Endothelial cell of umbilical vein (primary cell): ENCODE measurements at regions of chr1 and their contacts with region 1.

Region 1: GRCh38 chr1:32005522-32005921 is 8.1 kb upstream of the KHDRBS1 start:
- DNase-seq: no peak
- H3K4me3 ChIP-seq: no peak overlapping the region
- H3K27ac ChIP-seq: no peak overlapping the region
- H3K4me1 ChIP-seq: peaks cover 14% of the 10 kb centered on the region
- H3K27me3 ChIP-seq: no peaks in the 10 kb centered on the region
- CTCF ChIP-seq: no peak
- POLR2A ChIP-seq: no peak

Region 2: DNA sequence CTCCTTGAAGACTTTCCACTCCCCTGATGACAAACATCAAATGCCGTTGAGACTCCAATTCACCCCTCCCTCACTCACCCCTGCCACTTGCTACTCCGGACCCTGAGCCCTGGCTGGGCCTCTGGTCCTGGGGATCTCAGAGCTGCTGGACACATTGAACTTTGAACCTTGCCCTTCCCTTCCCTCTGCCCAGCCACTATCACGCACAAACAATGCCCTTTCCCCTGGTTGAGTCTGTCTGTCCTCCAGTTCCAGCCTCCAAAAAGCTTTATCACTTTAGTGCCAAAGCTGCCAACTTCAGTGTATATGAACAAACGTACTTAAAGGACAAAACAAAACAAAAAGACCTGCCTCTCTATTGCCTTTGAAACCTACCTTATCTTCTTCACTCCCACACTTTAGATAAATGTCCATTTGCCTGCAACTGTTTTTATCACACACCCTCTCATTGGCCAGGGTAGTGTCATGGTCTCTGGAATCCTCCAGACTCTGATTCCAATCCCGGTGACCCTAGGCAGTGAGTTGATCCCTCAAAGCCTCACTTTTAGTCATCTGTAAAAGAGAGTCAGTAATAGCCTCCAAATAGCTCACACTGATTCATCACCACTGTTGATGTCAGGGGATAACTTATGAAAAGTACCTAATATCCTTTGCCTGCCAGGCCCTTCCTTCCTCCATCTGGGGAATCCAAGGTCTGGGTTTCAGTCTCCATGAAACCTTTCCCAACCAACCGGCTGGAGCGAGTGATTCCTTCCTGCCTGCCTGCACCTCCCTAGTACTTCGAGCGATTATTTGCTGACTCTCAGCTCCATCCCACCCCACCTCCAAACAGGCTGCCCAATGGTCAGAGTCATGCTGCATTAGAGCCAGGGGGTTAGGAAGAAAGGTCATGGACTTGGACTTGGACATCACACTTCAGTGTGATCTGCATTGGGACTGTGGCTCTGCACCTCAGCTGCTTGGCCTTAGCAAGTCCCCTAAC is 173.8 kb before region 1 on chr1:
- CTCF ChIA-PET with region 1: no interaction called
- POLR2A ChIA-PET with region 1: no interaction called
- dilution Hi-C with region 1: no loop called
- intact Hi-C with region 1: no loop called
- DNase-seq: no peak
- H3K4me3 ChIP-seq: no peak overlapping the region
- H3K27ac ChIP-seq: no peak overlapping the region
- H3K4me1 ChIP-seq: no peaks in the 10 kb centered on the region
- H3K27me3 ChIP-seq: peaks cover 3 to 6% of the 10 kb centered on the region in 2 experiments
- CTCF ChIP-seq: no peak
- POLR2A ChIP-seq: no peak

Region 3: GRCh38 chr1:31977385-31978131 is 28.0 kb before region 1 on chr1:
- CTCF ChIA-PET with region 1: interaction called, 27 read pairs
- POLR2A ChIA-PET with region 1: no interaction called
- dilution Hi-C with region 1: no loop called
- intact Hi-C with region 1: no loop called
- DNase-seq: peak; percentile 44
- H3K4me3 ChIP-seq: no peak overlapping the region
- H3K27ac ChIP-seq: no peak overlapping the region
- H3K4me1 ChIP-seq: peaks cover 4% of the 10 kb centered on the region
- H3K27me3 ChIP-seq: no peaks in the 10 kb centered on the region
- CTCF ChIP-seq: peak; percentile 14 to 48
- POLR2A ChIP-seq: no peak

Region 4: DNA sequence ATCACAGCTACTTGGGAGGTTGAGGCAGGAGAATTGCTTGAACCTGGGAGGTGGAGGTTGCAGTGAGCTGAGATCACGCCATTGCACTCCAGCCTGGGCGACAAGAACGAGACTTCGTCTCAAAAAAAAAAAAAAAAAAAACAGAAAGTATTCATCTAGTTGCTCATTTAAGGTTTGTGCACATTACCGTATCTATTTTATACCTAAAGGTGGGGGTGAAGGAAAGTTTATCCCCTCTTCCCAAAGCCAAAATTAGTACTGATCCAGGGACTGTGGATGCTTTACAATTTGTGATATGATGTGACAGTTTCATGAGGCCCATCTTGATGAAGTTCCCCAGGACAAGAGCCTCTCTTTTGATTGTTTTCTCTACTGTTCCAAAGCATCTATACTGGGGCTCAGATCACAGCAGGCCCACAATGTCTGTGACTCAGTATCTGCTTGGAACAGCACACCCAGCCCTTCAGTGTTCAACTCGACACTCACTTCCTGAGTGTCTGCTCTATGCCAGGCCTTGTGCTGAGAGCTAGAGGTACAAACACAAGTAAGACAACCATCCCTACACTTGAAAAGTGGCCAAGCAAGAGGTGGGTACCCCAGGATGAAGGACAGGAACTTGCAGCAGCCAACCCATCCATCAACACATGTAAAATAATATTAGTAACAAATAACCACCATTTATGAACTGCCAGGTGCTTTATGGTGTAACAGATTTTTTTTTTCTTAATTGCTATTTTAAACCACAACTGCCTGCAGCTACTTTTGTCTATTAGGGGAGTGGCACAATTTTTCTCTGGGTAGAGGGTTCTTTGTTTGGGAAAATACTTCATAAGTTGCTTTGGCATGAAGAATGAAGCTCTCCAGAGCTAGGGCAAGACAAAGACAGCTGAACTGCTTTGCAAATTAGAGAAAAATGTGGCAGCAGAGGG is 20.8 kb before region 1 on chr1:
- CTCF ChIA-PET with region 1: interaction called, 14 read pairs
- POLR2A ChIA-PET with region 1: no interaction called
- dilution Hi-C with region 1: no loop called
- intact Hi-C with region 1: no loop called
- DNase-seq: peak; percentile 64
- H3K4me3 ChIP-seq: no peak overlapping the region
- H3K27ac ChIP-seq: no peak overlapping the region
- H3K4me1 ChIP-seq: peaks cover 16% of the 10 kb centered on the region
- H3K27me3 ChIP-seq: no peaks in the 10 kb centered on the region
- CTCF ChIP-seq: no peak
- POLR2A ChIP-seq: no peak

Region 5: DNA sequence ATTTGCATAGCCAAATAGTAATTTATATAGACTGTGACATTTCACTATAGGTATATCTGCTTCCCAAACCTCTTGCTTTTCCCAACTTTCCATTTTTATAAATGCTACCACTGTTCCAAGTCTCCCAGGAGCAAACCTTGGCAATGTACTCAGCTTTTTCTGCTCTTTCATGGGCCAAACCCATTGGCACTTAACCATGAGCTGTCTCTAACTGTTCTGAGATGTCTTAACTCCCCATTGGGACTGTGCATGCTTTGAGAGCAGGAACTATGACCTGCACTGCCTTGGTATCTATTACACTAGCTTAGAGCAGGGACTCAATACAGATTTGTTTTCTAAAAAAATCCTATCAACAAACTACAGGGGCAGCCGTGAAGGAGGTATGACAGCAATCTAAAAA is 14.3 kb before region 1 on chr1:
- CTCF ChIA-PET with region 1: interaction called, 14 read pairs
- POLR2A ChIA-PET with region 1: no interaction called
- dilution Hi-C with region 1: no loop called
- intact Hi-C with region 1: no loop called
- DNase-seq: no peak
- H3K4me3 ChIP-seq: no peak overlapping the region
- H3K27ac ChIP-seq: no peak overlapping the region
- H3K4me1 ChIP-seq: no peaks in the 10 kb centered on the region
- H3K27me3 ChIP-seq: no peaks in the 10 kb centered on the region
- CTCF ChIP-seq: no peak
- POLR2A ChIP-seq: no peak

Region 6: DNA sequence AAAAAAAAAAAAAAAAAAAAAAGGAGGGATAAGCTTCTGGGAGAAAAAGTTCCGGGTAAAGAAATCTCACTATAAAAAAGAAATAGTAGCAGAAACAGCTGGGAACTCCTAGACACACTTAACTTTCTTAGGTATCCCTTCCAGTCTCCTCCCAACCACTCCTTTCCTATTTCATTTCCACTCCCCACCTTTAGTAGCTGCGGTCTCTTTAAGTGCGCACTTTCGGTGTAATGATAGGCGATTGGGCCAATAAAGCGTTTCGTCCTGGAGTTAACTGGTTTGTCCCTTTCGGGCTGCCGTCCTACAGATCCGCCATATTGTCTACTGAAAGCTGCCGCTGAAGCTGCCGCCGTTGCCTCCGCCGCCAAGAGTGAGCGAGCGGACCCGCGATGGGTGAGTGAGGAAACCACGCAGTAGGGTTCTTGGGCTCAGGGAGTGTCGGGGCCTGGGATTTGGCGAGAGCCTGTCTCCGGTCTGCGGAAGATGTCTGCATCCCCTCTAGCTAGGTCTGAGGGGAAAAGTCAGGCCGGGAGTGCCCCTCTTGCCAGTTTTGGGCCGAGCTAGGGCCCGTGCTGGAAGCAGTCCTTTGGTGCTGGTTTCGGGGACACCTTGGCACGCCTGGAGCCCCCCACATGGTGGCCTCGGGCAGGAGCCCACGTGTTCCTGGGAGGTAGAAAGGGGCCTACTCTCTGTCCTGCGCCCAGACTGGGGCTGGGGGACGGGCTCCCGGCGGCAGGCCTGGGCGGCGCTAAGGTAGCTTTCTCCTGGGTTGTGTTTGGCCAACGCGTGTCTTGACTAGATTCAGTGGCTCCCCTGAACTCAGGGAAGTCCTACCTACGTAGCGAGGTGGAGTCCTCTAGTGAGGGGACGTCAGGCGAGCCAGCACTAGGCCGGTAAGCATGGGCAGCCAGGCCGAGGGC is 102.5 kb after region 1 on chr1 and contains the start of gene KPNA6:
- CTCF ChIA-PET with region 1: no interaction called
- POLR2A ChIA-PET with region 1: no interaction called
- dilution Hi-C with region 1: no loop called
- intact Hi-C with region 1: no loop called
- DNase-seq: peak; percentile 97
- H3K4me3 ChIP-seq: peak within 1 kb of the TSS; percentile 72 to 86 (median 81)
- H3K27ac ChIP-seq: peak within 1 kb of the TSS; percentile 66
- H3K4me1 ChIP-seq: peaks cover 4% of the 10 kb centered on the region
- H3K27me3 ChIP-seq: no peaks in the 10 kb centered on the region
- CTCF ChIP-seq: no peak
- POLR2A ChIP-seq: peak; percentile 52
- total RNA-seq, gene KPNA6: 83.4 and 85.6 TPM in 2 replicates